Heart right ventricle (tissue), 16 donors: ENCODE measurements at regions of chr7 and their contacts with region 1.

Region 1: DNA sequence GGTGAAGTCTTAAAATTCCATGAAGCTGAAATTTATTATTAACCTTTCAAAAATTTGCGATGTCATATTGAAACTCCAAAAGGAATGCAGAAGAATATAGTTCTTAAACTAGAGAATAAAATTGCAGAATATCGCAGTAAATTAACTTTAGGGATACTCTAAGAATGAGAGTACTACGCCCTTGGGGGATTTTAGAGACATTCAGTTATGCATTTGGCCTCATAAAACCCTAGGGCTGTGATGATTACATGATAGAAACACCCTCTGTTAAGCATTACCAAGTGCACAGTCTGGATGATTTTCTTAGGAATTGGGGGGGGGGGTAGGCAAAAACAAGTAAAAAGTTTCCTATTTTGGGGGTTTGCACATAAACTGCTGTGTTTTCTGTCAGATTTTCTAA is 3.6 kb downstream of the WNT2 start:
- DNase-seq: no peak
- ATAC-seq: no peak
- H3K4me3 ChIP-seq: no peak overlapping the region
- H3K27ac ChIP-seq: no peak overlapping the region
- H3K4me1 ChIP-seq: peaks cover 4 to 18% (median 14%) of the 10 kb centered on the region in 9 donors
- H3K27me3 ChIP-seq: peaks cover 0 to 50% (median 39%) of the 10 kb centered on the region in 7 donors
- CTCF ChIP-seq: no peak

Region 2: DNA sequence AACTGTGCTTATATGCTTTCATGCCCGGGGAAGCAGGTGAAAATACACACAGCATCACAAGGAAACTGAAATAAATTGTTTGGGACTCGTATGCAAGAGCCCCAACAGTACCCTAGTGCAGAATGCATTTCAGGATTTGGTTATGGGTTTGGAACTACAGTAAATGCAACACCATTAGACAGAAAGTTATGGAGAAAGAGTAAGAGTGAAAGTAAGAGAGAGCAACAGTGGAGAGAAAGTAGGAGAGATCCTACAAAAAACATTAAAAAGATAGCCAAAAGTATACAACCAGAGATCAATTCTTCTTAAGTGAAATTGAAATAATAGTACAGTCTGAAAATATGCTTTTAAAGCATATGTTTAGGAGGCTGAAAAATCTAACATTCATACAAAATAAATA is 1519.8 kb before region 1 on chr7:
- intact Hi-C with region 1: loop called in 1 of 10 experiments (anchors 5 kb)
- DNase-seq: no peak
- ATAC-seq: no peak
- H3K4me3 ChIP-seq: no peak overlapping the region
- H3K27ac ChIP-seq: no peak overlapping the region
- H3K4me1 ChIP-seq: no peaks in the 10 kb centered on the region
- H3K27me3 ChIP-seq: peaks cover 0 to 7% (median 0%) of the 10 kb centered on the region in 7 donors
- CTCF ChIP-seq: no peak